ENCODE measurements at regions of chr3 and their contacts with region 1.

Region 1: GRCh38 chr3:114213627-114214541 is 23.5 kb downstream of the ZNF80 start:
- DNase-seq: peak; percentile 61 to 89 (median 80)
- H3K4me3 ChIP-seq: peak overlapping the region; percentile 61
- H3K4me3 Mint-ChIP-seq: no peak overlapping the region
- H3K27ac ChIP-seq: peak overlapping the region; percentile 90
- H3K27ac Mint-ChIP-seq: no peak overlapping the region
- H3K4me1 ChIP-seq: peaks cover 67% of the 10 kb centered on the region
- H3K4me1 Mint-ChIP-seq: peaks cover 0 to 6% (median 0%) of the 10 kb centered on the region in 3 donors
- H3K27me3 ChIP-seq: no peaks in the 10 kb centered on the region
- H3K27me3 Mint-ChIP-seq: no peaks in the 10 kb centered on the region

Region 2: DNA sequence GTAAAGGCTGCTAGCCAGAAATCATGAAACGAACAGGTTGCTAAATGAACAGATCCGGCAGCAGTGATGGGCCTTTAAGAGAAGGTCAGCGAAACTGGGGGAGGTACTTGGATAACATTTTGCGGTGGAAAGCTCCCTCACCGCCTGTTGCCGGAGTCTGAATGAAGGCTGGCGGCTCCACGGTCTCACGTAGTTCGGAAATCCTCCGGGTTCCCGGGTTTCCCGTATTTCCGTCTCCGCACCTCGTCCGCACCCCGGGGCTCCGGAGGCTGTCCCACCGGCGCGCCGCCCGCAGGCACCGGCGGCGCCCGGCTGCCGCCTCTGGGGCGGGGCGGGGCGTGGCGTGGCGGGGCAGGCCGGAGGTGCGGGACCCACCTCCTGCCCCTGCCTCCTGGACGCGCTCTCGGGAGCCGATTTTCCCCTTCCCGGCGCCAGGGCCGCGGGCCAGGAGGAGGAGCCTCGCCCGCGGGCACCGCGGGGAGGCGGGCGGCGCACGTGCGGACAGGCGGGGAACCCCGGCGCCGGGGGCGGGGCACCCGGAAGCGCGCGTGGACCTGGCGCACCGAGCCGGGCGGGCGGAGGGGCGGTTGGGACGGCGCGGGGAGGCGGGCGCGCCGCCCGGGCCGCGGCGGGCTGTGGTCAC is 266.4 kb before region 1 on chr3 and contains the start of gene ZDHHC23:
- CTCF ChIA-PET with region 1: no interaction called
- POLR2A ChIA-PET with region 1: no interaction called
- DNase-seq: peak; percentile 65 to 81 (median 73)
- H3K4me3 ChIP-seq: peak within 1 kb of the TSS; percentile 68
- H3K4me3 Mint-ChIP-seq: peak within 1 kb of the TSS; percentile 80 to 93 (median 86)
- H3K27ac ChIP-seq: no peak within 1 kb of the TSS
- H3K27ac Mint-ChIP-seq: peak within 1 kb of the TSS; percentile 18 to 90 (median 82)
- H3K4me1 ChIP-seq: peaks cover 7% of the 10 kb centered on the region
- H3K4me1 Mint-ChIP-seq: peaks cover 12 to 18% (median 13%) of the 10 kb centered on the region in 3 donors
- H3K27me3 ChIP-seq: no peaks in the 10 kb centered on the region
- H3K27me3 Mint-ChIP-seq: peaks cover 2 to 20% of the 10 kb centered on the region in 2 donors
- total RNA-seq, gene ZDHHC23: 4.3 TPM

Region 3: DNA sequence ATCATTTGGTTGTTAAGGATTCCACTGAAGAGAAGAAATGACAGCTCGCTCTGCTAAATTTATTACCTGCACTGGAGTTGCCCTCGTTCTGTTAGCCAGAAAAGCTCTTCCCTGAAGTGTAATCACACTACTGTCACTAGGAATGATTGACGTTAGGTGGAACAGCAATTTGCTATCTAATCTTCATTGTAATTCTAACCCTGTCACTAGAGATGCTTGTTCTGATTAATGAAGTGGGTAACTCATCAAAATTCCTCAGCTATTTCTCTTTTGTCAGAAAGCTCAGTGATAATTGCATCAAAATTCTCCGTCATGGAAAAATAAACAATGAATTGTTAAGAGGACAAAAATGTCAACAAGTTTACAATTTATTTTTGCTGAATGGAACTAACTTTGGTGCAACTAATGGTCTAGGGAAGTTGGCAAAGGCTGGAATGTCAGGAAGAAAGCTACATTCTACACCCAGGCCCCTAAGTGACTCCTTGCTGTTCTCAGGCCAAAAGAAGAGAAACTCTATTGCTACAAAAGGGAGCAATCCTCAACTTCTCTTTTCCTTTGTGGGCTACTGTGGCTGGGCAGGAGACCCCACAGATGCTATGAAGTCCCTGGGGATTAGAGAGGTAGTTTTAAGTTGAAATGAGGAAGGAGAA is 191.6 kb before region 1 on chr3:
- CTCF ChIA-PET with region 1: no interaction called
- POLR2A ChIA-PET with region 1: no interaction called
- DNase-seq: no peak
- H3K4me3 ChIP-seq: no peak overlapping the region
- H3K4me3 Mint-ChIP-seq: no peak overlapping the region
- H3K27ac ChIP-seq: no peak overlapping the region
- H3K27ac Mint-ChIP-seq: no peak overlapping the region
- H3K4me1 ChIP-seq: no peaks in the 10 kb centered on the region
- H3K4me1 Mint-ChIP-seq: no peaks in the 10 kb centered on the region
- H3K27me3 ChIP-seq: no peaks in the 10 kb centered on the region
- H3K27me3 Mint-ChIP-seq: no peaks in the 10 kb centered on the region

Region 4: DNA sequence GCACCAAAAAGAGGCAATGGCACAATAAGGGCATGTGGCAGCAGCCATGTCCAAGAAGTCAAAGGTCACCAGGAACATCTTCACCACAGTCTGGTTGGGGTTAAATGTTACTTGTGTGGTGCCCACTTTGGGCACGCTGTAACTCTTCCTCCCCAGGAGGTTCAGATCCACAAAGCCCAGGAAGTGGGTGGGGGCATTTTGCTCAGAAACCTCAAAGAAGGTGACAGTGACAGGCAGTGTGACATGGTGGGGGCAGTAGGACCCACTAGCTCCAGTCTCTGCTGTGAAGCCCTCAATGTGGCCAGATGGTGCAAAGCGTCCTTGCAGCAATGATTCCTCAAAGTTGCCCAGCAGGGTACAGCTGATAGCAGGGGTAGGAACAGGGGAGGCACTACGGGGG is 17.7 kb after region 1 on chr3:
- CTCF ChIA-PET with region 1: interaction called, 12 read pairs
- POLR2A ChIA-PET with region 1: interaction called, 62 read pairs
- DNase-seq: peak; percentile 33 to 83 (median 71)
- H3K4me3 ChIP-seq: peak overlapping the region; percentile 38
- H3K4me3 Mint-ChIP-seq: peak overlapping the region; percentile 69 to 89 (median 75)
- H3K27ac ChIP-seq: peak overlapping the region; percentile 34
- H3K27ac Mint-ChIP-seq: peak overlapping the region; percentile 91 to 99 (median 97)
- H3K4me1 ChIP-seq: peaks cover 87% of the 10 kb centered on the region
- H3K4me1 Mint-ChIP-seq: peaks cover 22 to 87% (median 36%) of the 10 kb centered on the region in 3 donors
- H3K27me3 ChIP-seq: no peaks in the 10 kb centered on the region
- H3K27me3 Mint-ChIP-seq: no peaks in the 10 kb centered on the region

Region 5: DNA sequence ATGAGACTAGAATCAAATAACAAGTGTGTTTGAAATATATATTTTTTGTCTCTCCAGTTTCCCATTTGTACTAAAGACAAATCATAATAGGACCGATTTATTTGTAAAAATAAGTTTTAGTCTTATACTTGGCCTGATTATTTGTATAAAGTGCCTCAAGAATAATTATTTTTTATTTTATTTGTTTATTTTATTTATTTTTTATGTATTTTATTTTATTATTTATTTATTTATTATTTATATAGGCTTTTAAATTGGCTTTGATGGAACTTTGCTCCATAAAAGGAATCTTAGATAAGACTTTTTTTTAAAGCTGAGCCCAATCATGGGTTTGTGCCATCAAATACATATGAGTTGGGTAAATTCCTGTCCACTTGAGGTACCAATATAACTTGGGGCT is 45.7 kb after region 1 on chr3:
- CTCF ChIA-PET with region 1: no interaction called
- POLR2A ChIA-PET with region 1: no interaction called
- DNase-seq: no peak
- H3K4me3 ChIP-seq: no peak overlapping the region
- H3K4me3 Mint-ChIP-seq: no peak overlapping the region
- H3K27ac ChIP-seq: no peak overlapping the region
- H3K27ac Mint-ChIP-seq: no peak overlapping the region
- H3K4me1 ChIP-seq: no peaks in the 10 kb centered on the region
- H3K4me1 Mint-ChIP-seq: peaks cover 9 to 20% (median 13%) of the 10 kb centered on the region in 3 donors
- H3K27me3 ChIP-seq: no peaks in the 10 kb centered on the region
- H3K27me3 Mint-ChIP-seq: peaks cover 0 to 1% of the 10 kb centered on the region in 2 donors

Region 6: DNA sequence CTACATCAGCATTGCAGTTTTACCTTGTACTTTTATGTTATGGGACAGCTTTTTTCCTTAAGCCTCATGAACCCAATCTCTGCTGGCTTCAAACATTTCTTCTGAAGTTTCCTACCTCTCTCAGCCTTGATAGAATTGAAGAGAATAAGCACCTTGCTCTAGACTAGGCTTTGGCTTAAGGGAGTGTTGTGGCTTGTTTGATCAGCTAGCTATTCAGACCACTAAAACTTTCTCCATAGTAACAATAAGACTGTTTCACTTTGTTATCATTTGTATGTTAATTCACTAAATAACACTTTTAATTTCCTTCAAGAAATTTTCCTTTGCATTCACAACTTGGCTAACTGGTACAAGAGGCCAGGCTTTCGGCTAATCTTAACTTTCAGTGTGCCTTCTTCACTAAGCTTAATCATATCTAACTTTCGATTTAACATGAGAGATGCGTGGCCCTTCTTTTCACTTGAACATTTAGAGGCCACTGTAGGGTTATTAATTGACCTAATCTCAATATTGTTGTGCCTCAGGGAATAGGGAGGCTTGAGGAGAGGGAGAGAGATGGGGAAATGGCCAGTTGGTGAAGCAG is 71.9 kb after region 1 on chr3:
- CTCF ChIA-PET with region 1: interaction called, 124 read pairs
- POLR2A ChIA-PET with region 1: interaction called, 119 read pairs
- DNase-seq: peak in 2 of 5 donors; percentile 43 to 52
- H3K4me3 ChIP-seq: no peak overlapping the region
- H3K4me3 Mint-ChIP-seq: peak overlapping the region; percentile 41 to 86 (median 82)
- H3K27ac ChIP-seq: peak overlapping the region; percentile 62
- H3K27ac Mint-ChIP-seq: peak overlapping the region; percentile 89 to 100 (median 97)
- H3K4me1 ChIP-seq: peaks cover 3% of the 10 kb centered on the region
- H3K4me1 Mint-ChIP-seq: peaks cover 25 to 48% (median 44%) of the 10 kb centered on the region in 3 donors
- H3K27me3 ChIP-seq: no peaks in the 10 kb centered on the region
- H3K27me3 Mint-ChIP-seq: no peaks in the 10 kb centered on the region

Region 7: GRCh38 chr3:114308830-114309229 is 94.9 kb after region 1 on chr3:
- CTCF ChIA-PET with region 1: interaction called, 22 read pairs
- POLR2A ChIA-PET with region 1: interaction called, 30 read pairs
- DNase-seq: peak; percentile 36 to 85 (median 54)
- H3K4me3 ChIP-seq: peak overlapping the region; percentile 27
- H3K4me3 Mint-ChIP-seq: peak overlapping the region; percentile 57 to 84 (median 73)
- H3K27ac ChIP-seq: peak overlapping the region; percentile 64
- H3K27ac Mint-ChIP-seq: peak overlapping the region; percentile 86 to 99 (median 96)
- H3K4me1 ChIP-seq: peaks cover 67% of the 10 kb centered on the region
- H3K4me1 Mint-ChIP-seq: peaks cover 73 to 93% (median 91%) of the 10 kb centered on the region in 3 donors
- H3K27me3 ChIP-seq: no peaks in the 10 kb centered on the region
- H3K27me3 Mint-ChIP-seq: peaks cover 0 to 3% of the 10 kb centered on the region in 2 donors

Region 8: DNA sequence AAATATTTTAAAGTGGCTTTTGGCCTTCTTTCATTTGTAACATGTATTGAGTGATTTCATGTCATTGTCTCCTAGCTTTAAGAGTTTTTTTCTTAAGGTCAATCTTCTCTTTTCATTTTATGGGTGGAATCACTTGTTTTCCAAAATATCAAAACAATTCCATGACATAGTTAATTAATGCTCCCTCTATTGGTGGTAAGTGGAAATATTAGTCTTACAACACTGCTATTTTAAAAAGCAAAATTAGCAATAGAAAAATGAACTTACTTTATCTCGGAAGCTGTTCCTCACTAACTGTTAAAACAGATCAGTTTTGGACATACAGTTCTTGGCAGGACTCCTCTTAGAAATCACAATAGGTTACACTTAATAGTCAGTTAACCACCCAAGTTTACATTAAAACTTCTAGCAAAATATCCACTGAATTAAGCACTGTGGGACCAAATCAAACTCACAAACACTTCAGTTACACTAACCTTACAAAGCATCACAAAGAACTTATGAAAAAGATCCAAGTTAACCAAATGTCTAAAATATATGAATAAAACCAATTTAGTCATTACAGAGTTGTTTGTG is 122.3 kb after region 1 on chr3:
- CTCF ChIA-PET with region 1: interaction called, 13 read pairs
- POLR2A ChIA-PET with region 1: interaction called, 4 read pairs
- DNase-seq: no peak
- H3K4me3 ChIP-seq: no peak overlapping the region
- H3K4me3 Mint-ChIP-seq: peak overlapping the region in 3 of 7 donors; percentile 1 to 32 (median 5)
- H3K27ac ChIP-seq: no peak overlapping the region
- H3K27ac Mint-ChIP-seq: peak overlapping the region in 7 of 8 donors; percentile 1 to 93 (median 65)
- H3K4me1 ChIP-seq: peaks cover 19% of the 10 kb centered on the region
- H3K4me1 Mint-ChIP-seq: peaks cover 62 to 95% (median 92%) of the 10 kb centered on the region in 3 donors
- H3K27me3 ChIP-seq: no peaks in the 10 kb centered on the region
- H3K27me3 Mint-ChIP-seq: no peaks in the 10 kb centered on the region

Measured in CD8-positive, alpha-beta memory T cell (primary cell).